Activated T-helper 1 cell treated with anti-CD3 and anti-CD28 coated beads, Interleukin-12 subunit alpha, Interleukin-12 subunit beta, Interleukin-2, Interleukin-4 antibody, amounts not matched to agents 30 ng/mL and 10 ng/mL and 1 ng/mL, durations not matched to agents 14 hours and 24 hours and 36 hours (primary cell): ENCODE measurements at regions of chr12 and their contacts with region 1.

Region 1: GRCh38 chr12:117190210-117190781 is at the start of gene FBXO21:
- DNase-seq: peak; percentile 89
- H3K4me3 Mint-ChIP-seq: peak within 1 kb of the TSS; percentile 96
- H3K27ac Mint-ChIP-seq: peak within 1 kb of the TSS; percentile 80
- H3K4me1 Mint-ChIP-seq: peaks cover 27% of the 10 kb centered on the region
- H3K27me3 Mint-ChIP-seq: peaks cover 11% of the 10 kb centered on the region
- total RNA-seq, gene FBXO21: 24.8 and 25.2 TPM in 2 replicates

Region 2: GRCh38 chr12:116737774-116738700 is 452.3 kb before region 1 on chr12 and contains the starts of genes RNFT2 and SPRING1:
- intact Hi-C with region 1: loop called (anchors 1 kb)
- DNase-seq: peak; percentile 99
- H3K4me3 Mint-ChIP-seq: peak within 1 kb of the TSS; percentile 85
- H3K27ac Mint-ChIP-seq: peak within 1 kb of the TSS; percentile 85
- H3K4me1 Mint-ChIP-seq: peaks cover 13% of the 10 kb centered on the region
- H3K27me3 Mint-ChIP-seq: no peaks in the 10 kb centered on the region
- total RNA-seq, gene RNFT2: 8.0 and 11.8 TPM in 2 replicates
- total RNA-seq, gene SPRING1: 31.0 and 39.0 TPM in 2 replicates

Region 3: DNA sequence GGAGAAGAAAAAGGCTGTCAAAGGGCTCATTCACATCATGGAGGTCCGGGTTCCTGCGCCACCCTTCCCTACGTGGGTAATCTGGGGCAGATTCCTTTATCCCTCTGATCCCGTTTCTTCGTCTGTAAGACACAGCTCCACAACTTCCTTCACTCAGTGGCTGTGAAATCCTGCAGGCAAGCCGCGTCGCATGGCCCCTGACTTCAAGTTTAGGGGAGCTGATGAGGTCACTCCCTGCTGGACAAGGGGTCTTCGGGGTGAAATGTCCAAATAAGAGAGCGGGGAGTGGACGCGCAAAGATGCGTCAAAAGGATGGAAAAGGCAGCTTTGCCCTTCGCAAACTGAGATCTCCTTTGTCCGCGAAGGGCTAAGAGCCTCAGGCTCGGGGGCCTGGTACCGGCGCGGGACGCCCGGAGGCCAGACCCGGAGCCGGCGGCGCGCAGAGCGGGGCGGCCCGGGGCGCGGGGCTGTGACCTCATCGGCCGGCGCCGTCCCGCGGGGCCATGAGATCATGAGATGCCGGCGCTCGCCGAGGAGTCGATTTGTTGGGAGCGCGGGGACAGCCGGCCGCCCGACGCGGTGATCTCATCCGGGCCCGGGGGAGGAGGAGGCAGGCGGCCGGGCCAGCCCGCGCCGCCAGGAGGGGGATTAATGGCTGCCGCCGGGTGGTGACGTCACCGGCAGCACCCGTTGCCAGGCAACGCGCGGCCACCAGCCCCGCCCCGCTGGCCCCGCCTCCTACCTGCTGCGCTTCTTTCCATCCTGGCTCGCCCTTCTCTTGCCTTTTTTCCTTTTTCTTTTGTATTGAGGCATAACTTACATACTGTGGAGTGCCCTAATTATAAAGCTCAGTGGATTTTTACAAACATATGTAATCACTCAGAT is 371.1 kb before region 1 on chr12:
- intact Hi-C with region 1: loop called (anchors 1 kb)
- DNase-seq: peak; percentile 85
- H3K4me3 Mint-ChIP-seq: peak overlapping the region; percentile 94
- H3K27ac Mint-ChIP-seq: peak overlapping the region; percentile 98
- H3K4me1 Mint-ChIP-seq: peaks cover 21% of the 10 kb centered on the region
- H3K27me3 Mint-ChIP-seq: peaks cover 9% of the 10 kb centered on the region

Region 4: GRCh38 chr12:116955382-116956021 is 234.8 kb before region 1 on chr12:
- intact Hi-C with region 1: loop called (anchors 1 kb)
- DNase-seq: no peak
- H3K4me3 Mint-ChIP-seq: no peak overlapping the region
- H3K27ac Mint-ChIP-seq: no peak overlapping the region
- H3K4me1 Mint-ChIP-seq: peaks cover 32% of the 10 kb centered on the region
- H3K27me3 Mint-ChIP-seq: no peaks in the 10 kb centered on the region

Region 5: DNA sequence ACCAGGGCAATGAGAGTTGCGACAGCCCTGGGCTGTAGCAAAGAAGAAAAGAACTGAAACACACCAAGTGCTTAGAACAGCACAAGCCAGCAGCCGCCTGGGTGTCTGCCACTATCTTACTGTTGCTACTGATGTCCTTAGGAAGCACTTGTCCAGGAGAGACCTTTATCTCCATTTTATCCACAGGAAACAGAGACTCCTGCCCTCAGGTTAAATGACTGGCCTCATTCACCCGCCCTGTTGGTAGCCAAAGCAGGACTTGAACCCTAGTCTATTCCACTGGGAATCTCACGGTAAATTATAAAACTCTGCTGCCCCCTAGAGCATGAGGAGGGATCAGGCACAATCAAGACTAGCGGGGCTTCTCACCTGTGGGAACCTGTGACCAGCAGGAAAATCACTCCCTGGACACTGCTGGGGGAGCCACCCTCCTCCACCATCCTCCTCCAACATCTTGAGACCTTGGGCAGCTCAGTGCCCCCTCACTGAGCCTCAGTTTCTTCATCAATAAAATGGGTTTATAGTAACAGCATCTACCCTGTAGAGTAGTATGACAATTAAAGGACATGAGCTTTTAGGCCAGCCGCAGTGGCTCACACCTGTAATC is 70.6 kb before region 1 on chr12:
- intact Hi-C with region 1: no loop called
- DNase-seq: peak; percentile 8
- H3K4me3 Mint-ChIP-seq: no peak overlapping the region
- H3K27ac Mint-ChIP-seq: no peak overlapping the region
- H3K4me1 Mint-ChIP-seq: peaks cover under 1% of the 10 kb centered on the region
- H3K27me3 Mint-ChIP-seq: peaks cover 1% of the 10 kb centered on the region

Region 6: DNA sequence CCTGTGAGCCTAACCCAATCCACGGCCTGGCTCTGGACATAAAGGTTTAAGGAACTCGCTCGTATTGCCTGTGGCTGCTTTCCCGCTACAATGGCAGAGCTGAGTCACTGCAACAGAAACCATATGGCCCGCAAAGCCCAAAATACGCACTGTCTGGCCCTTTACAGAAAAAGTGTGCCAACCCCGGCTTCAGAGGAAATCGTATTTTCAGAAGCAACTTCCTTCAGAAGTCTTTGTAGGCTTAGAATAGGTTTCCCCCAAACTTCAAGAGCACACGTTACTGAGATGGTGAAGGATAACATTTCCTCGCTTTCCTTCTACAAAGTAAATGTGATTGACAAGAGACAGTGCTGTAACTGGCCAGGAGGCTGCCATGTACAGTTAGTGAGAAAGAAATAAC is 56.2 kb before region 1 on chr12:
- intact Hi-C with region 1: loop called (anchors 1 kb)
- DNase-seq: peak; percentile 59
- H3K4me3 Mint-ChIP-seq: peak overlapping the region; percentile 20
- H3K27ac Mint-ChIP-seq: peak overlapping the region; percentile 87
- H3K4me1 Mint-ChIP-seq: peaks cover 11% of the 10 kb centered on the region
- H3K27me3 Mint-ChIP-seq: peaks cover 5% of the 10 kb centered on the region

Region 7: GRCh38 chr12:117148642-117149041 is 41.7 kb before region 1 on chr12:
- intact Hi-C with region 1: loop called (anchors 2 kb)
- DNase-seq: no peak
- H3K4me3 Mint-ChIP-seq: no peak overlapping the region
- H3K27ac Mint-ChIP-seq: peak overlapping the region; percentile 79
- H3K4me1 Mint-ChIP-seq: peaks cover 55% of the 10 kb centered on the region
- H3K27me3 Mint-ChIP-seq: no peaks in the 10 kb centered on the region